Upper lobe of right lung (tissue), 1 donor: ENCODE measurements at regions of chr1 and their contacts with region 1.

Region 1: GRCh38 chr1:61337981-61338848 is 255.9 kb downstream of the NFIA start:
- DNase-seq: peak; percentile 76
- ATAC-seq: peak; percentile 97
- H3K4me3 ChIP-seq: peak overlapping the region; percentile 27
- H3K27ac ChIP-seq: peak overlapping the region; percentile 83
- H3K4me1 ChIP-seq: peaks cover 15% of the 10 kb centered on the region
- H3K27me3 ChIP-seq: no peaks in the 10 kb centered on the region
- CTCF ChIP-seq: peak; percentile 72

Region 2: DNA sequence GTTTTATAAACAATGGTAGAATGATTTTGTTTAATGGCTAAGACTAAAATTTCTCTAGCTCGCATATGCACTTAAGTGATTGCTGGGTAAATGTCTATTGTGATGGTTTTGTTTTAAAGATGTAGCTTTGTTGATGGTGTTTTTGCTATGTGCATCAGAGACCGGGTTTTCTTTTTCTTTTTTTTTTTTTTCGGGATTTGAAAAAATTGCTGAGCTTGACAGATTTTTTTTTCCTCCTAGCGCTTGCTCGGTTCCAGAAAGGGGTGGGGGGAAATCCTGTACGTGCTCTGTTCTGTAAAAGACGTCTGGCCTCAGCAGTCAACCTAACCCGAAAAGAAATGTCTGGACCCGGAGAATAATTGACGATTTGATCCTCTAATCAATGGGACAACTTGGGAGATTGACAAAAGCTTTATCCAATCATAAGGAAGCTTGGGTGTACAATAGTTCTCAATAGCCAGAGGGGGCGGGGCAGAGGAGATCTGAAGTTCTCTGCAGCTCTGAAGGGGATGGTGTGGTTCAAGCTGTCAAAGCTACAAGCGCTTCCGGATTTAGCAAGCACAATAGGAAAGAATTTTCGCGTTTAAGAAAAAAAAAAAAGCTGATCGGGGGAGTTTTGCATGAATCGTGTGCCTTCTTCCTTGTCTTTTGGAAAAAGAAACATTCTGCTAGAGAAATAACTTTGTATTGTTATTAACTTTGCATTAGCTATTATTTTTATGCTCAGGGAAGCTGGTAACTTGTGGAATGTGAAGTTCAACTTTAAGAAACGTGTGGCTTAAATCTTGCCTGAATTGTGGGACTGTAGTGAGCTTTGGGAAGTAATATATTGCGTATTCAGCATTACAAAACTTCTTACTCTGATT is 260.3 kb before region 1 on chr1:
- intact Hi-C with region 1: loop called (anchors 10 kb)
- DNase-seq: peak; percentile 92
- ATAC-seq: peak; percentile 83
- H3K4me3 ChIP-seq: peak overlapping the region; percentile 61
- H3K27ac ChIP-seq: peak overlapping the region; percentile 89
- H3K4me1 ChIP-seq: peaks cover 34% of the 10 kb centered on the region
- H3K27me3 ChIP-seq: no peaks in the 10 kb centered on the region
- CTCF ChIP-seq: no peak

Region 3: DNA sequence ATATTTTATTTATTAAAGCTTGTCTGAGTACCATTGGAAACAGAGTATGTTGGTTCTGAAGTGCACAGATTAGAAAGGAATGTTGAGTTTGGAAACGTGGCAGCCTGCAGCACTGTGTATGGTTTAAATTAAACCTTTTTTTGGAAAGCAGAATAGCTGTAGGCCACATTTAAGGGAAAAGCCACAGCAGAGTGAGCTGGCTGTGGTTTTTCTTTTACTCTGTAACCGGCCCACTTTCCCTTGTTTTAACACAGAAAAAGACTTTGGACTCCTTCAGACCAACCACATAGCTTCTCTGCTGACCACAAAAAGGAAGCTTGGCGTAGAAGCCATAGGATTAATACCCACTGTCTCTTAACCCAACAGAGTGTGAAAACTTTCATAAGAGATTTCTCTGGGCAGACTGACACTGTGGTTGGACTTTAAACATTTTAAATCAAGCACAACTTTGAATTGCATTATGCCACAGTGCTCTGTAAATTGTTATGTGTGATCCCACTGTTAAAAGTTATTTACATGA is 180.7 kb before region 1 on chr1:
- intact Hi-C with region 1: no loop called
- DNase-seq: no peak
- ATAC-seq: peak; percentile 77
- H3K4me3 ChIP-seq: no peak overlapping the region
- H3K27ac ChIP-seq: no peak overlapping the region
- H3K4me1 ChIP-seq: peaks cover 23% of the 10 kb centered on the region
- H3K27me3 ChIP-seq: no peaks in the 10 kb centered on the region
- CTCF ChIP-seq: no peak